K562 (cell line): ENCODE measurements at regions of chr18 and their contacts with region 1.

Region 1: GRCh38 chr18:658001-658946 is 821 bp downstream of the TYMS start:
- DNase-seq: peak; percentile 83 to 98 (median 87)
- ATAC-seq: peak; percentile 89
- H3K4me3 ChIP-seq: peak overlapping the region; percentile 93
- H3K27ac ChIP-seq: peak overlapping the region; percentile 96
- H3K4me1 ChIP-seq: peaks cover 19 to 27% of the 10 kb centered on the region in 2 experiments; a peak in 4 of 5 replicates
- H3K27me3 ChIP-seq: no peaks in the 10 kb centered on the region
- CTCF ChIP-seq: no peak
- EP300 ChIP-seq: 0 out of 2 replicates have a peak, but pooled peaks have one; percentile 5
- POLR2A ChIP-seq: peak; percentile 95
- RAD21 ChIP-seq: no peak

Region 2: GRCh38 chr18:623761-624620 is 34.3 kb before region 1 on chr18:
- CTCF ChIA-PET with region 1: no interaction called
- POLR2A ChIA-PET with region 1: interaction called, 5 read pairs
- in situ Hi-C with region 1: no loop called
- intact Hi-C with region 1: loop called (anchors 2 kb)
- DNase-seq: peak; percentile 61 to 85 (median 64)
- ATAC-seq: peak; percentile 95
- H3K4me3 ChIP-seq: no peak overlapping the region
- H3K27ac ChIP-seq: no peak overlapping the region
- H3K4me1 ChIP-seq: peaks cover 3 to 4% of the 10 kb centered on the region in 2 experiments; a peak in 3 of 5 replicates
- H3K27me3 ChIP-seq: peaks cover 0 to 5% of the 10 kb centered on the region in 2 experiments; a peak in 2 of 5 replicates
- CTCF ChIP-seq: peak; percentile 78 to 85 (median 82)
- EP300 ChIP-seq: no peak
- POLR2A ChIP-seq: no peak
- RAD21 ChIP-seq: peak; percentile 70 to 81

Region 3: DNA sequence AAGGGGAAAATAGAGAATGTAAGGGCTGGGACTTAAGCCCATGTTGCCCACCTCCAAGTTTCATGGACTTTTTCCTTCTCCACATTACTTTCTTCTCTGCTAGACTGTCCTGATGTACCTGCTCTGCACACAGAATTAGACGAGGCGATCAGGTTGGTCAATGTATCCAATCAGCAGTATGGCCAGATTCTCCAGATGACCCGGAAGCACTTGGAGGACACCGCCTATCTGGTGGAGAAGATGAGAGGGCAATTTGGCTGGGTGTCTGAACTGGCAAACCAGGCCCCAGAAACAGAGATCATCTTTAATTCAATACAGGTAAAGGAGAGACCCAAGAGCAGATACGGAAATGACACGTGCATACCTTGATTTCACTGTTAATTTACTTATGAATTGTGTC is 17.1 kb before region 1 on chr18:
- CTCF ChIA-PET with region 1: no interaction called
- POLR2A ChIA-PET with region 1: interaction called, 16 read pairs
- in situ Hi-C with region 1: no loop called
- intact Hi-C with region 1: no loop called
- DNase-seq: no peak
- ATAC-seq: no peak
- H3K4me3 ChIP-seq: no peak overlapping the region
- H3K27ac ChIP-seq: no peak overlapping the region
- H3K4me1 ChIP-seq: no peaks in the 10 kb centered on the region
- H3K27me3 ChIP-seq: no peaks in the 10 kb centered on the region
- CTCF ChIP-seq: no peak
- EP300 ChIP-seq: no peak
- POLR2A ChIP-seq: no peak
- RAD21 ChIP-seq: no peak

Region 4: GRCh38 chr18:670522-670921 is 12.2 kb after region 1 on chr18:
- CTCF ChIA-PET with region 1: no interaction called
- POLR2A ChIA-PET with region 1: interaction called, 19 read pairs
- in situ Hi-C with region 1: no loop called
- intact Hi-C with region 1: no loop called
- DNase-seq: no peak
- ATAC-seq: no peak
- H3K4me3 ChIP-seq: no peak overlapping the region
- H3K27ac ChIP-seq: no peak overlapping the region
- H3K4me1 ChIP-seq: no peaks in the 10 kb centered on the region; a peak in 1 of 5 replicates
- H3K27me3 ChIP-seq: no peaks in the 10 kb centered on the region
- CTCF ChIP-seq: no peak
- EP300 ChIP-seq: no peak
- POLR2A ChIP-seq: peak; percentile 61
- RAD21 ChIP-seq: no peak

Region 5: GRCh38 chr18:677951-678381 is 19.7 kb after region 1 on chr18:
- CTCF ChIA-PET with region 1: no interaction called
- POLR2A ChIA-PET with region 1: interaction called, 19 read pairs
- in situ Hi-C with region 1: no loop called
- intact Hi-C with region 1: no loop called
- DNase-seq: peak in 1 of 4 experiments; percentile 27
- ATAC-seq: no peak
- H3K4me3 ChIP-seq: no peak overlapping the region
- H3K27ac ChIP-seq: no peak overlapping the region
- H3K4me1 ChIP-seq: peaks cover 0 to 7% of the 10 kb centered on the region in 2 experiments; a peak in 3 of 5 replicates
- H3K27me3 ChIP-seq: no peaks in the 10 kb centered on the region
- CTCF ChIP-seq: no peak
- EP300 ChIP-seq: no peak
- POLR2A ChIP-seq: 0 out of 2 replicates have a peak, but pooled peaks have one; percentile 36
- RAD21 ChIP-seq: no peak

Region 6: DNA sequence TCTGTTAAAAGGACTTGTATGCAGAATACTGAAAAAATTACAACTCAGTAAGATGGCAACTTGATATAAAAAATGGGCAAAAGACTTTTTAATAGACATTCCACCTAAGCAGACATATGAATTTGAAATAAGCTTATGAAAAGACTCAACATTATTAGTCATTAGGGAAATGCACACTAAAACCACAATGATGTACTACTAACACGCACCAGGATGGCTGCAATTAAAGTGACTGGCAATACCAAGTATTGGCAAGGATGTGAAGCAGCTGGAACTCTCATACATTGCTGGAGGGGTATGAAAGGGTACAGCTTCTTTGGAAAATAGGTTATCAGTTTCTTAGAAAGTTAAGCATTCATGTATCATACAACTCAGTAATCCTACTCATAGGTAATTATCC is 57.4 kb after region 1 on chr18:
- CTCF ChIA-PET with region 1: no interaction called
- POLR2A ChIA-PET with region 1: no interaction called
- in situ Hi-C with region 1: no loop called
- intact Hi-C with region 1: no loop called
- DNase-seq: no peak
- ATAC-seq: no peak
- H3K4me3 ChIP-seq: no peak overlapping the region
- H3K27ac ChIP-seq: no peak overlapping the region
- H3K4me1 ChIP-seq: peaks cover 3 to 10% of the 10 kb centered on the region in 2 experiments; a peak in 3 of 5 replicates
- H3K27me3 ChIP-seq: no peaks in the 10 kb centered on the region
- CTCF ChIP-seq: no peak
- EP300 ChIP-seq: no peak
- POLR2A ChIP-seq: no peak
- RAD21 ChIP-seq: no peak

Region 7: GRCh38 chr18:785242-785641 is 127.0 kb after region 1 on chr18:
- CTCF ChIA-PET with region 1: no interaction called
- POLR2A ChIA-PET with region 1: no interaction called
- in situ Hi-C with region 1: no loop called
- intact Hi-C with region 1: no loop called
- DNase-seq: no peak
- ATAC-seq: peak; percentile 11
- H3K4me3 ChIP-seq: no peak overlapping the region
- H3K27ac ChIP-seq: no peak overlapping the region; the same call in 2 of the 3 replicates
- H3K4me1 ChIP-seq: peaks cover 20 to 41% of the 10 kb centered on the region in 2 experiments
- H3K27me3 ChIP-seq: no peaks in the 10 kb centered on the region
- CTCF ChIP-seq: no peak
- EP300 ChIP-seq: no peak
- POLR2A ChIP-seq: no peak
- RAD21 ChIP-seq: no peak